Kidney (tissue), 22 donors: ENCODE measurements at regions of chr19 and their contacts with region 1.

Region 1: DNA sequence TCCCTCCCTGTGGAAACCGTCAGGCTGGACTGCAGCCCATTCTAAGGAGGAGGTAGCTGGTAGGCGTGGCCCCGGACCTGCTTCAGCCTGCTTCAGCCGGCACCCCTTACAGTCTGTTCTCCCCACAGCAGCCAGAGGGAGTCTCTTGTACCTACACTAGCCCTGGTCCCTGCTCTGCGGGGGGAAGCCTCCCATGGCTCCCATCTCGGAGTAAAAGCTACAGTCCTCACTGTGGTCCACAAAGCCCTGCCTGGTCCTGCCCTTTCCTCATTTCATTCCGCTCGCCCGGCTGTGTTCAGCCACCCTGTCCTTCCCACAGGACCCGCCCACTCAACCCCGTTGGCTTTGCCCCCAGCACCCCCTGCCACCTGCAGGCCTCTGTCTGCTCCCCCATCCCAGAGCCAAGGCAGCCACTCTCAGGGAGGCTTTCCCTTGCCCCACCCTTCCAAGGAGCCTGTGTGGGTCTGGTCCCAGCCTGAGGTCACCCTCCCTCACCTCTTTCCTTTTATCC is 1.3 kb downstream of the PGLYRP1 start:
- DNase-seq: peak in 1 of 5 donors; percentile 30
- H3K4me3 ChIP-seq: no peak overlapping the region
- H3K27ac ChIP-seq: no peak overlapping the region
- H3K4me1 ChIP-seq: no peaks in the 10 kb centered on the region
- H3K27me3 ChIP-seq: no peaks in the 10 kb centered on the region
- CTCF ChIP-seq: no peak

Region 2: DNA sequence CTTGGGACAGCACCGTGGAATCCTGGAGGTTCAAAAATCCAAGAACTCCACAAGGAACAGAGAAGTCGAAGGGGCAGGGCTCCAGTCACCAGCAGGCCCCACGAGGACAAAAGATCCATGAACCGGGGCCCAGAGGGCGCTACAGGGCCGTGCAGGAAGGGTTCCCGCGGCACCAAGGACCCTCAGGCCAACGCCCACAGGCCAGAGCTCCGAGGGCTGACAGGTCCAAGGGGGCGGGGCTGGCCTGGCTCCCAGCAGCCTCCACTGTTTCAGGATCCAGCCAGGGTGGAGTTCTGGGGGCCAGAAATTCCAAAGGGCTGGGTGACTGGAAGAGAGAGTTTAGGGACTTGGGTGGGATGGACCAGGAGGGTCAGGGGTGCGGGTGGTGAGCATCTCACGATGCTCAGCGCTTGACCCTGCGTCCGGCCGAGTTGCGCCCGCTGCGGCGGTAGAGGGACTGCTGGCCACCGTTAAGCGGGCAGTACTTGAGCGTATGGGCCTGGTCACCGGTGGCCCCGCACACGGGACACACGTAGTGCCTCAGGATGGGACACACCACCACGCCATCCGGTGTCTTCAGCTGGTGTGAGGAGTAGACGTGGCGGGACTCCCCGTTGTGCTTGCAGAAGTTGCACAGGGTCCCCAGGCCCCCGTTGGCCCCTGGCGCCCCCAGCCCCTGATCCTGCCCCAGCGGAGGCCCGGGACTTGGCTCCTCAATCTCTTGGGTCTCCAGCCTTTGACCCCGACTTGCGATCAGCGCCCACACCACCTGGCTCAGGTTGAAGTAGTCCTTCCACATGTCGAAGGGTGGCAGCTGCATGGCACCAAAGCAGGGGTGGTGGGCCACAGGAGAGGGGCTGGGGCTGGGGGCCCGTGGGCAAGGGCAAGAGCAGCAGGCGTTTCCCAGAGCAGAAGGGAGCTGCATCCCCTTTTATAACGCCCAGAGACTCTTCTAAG is 107.4 kb before region 1 on chr19 and contains the start of gene NANOS2:
- intact Hi-C with region 1: no loop called
- DNase-seq: peak in 2 of 5 donors; percentile 5 to 10
- H3K4me3 ChIP-seq: no peak within 1 kb of the TSS
- H3K27ac ChIP-seq: no peak within 1 kb of the TSS
- H3K4me1 ChIP-seq: peaks cover 0 to 2% (median 0%) of the 10 kb centered on the region in 3 donors
- H3K27me3 ChIP-seq: no peaks in the 10 kb centered on the region
- CTCF ChIP-seq: no peak
- total RNA-seq, gene NANOS2: not detected

Region 3: DNA sequence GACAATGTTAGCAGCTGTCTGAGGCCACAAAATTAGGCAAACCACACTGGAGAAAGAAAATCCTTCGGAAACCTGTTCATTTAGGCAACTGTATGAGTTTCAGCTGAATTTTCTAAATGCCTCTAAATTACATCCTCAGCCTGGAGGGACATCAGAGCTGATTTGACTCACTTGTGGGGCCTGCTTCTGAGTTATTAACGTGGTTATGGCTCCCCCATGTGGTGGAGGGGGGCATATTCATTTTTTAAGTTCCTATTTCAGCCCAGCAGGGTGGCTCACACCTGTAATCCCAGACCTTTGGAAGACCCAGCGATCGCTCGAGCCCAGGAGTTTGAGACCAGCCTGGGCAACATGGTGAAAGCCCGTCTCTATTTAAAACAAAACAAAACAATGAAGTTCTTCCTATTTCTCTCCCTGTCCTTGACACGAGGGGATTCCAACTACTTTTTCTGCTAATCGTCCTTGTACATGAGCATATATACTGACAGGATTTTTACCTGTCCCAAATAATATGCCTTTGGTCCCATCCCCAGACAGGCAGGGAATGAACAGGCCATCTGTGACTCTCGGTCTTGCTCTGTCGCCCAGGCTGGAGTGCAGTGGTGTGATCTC is 243.7 kb after region 1 on chr19:
- intact Hi-C with region 1: loop called (anchors 10 kb)
- DNase-seq: peak in 4 of 5 donors; percentile 81 to 91 (median 85)
- H3K4me3 ChIP-seq: no peak overlapping the region
- H3K27ac ChIP-seq: no peak overlapping the region
- H3K4me1 ChIP-seq: no peaks in the 10 kb centered on the region
- H3K27me3 ChIP-seq: no peaks in the 10 kb centered on the region
- CTCF ChIP-seq: peak; percentile 89